Right cardiac atrium (tissue), 5 donors: ENCODE measurements at regions of chr15 and their contacts with region 1.

Region 1: GRCh38 chr15:70535071-70535954 is 228.0 kb downstream of the UACA start:
- DNase-seq: no peak
- ATAC-seq: no peak
- H3K4me3 ChIP-seq: no peak overlapping the region
- H3K27ac ChIP-seq: no peak overlapping the region
- H3K4me1 ChIP-seq: no peaks in the 10 kb centered on the region
- H3K27me3 ChIP-seq: no peaks in the 10 kb centered on the region

Region 2: DNA sequence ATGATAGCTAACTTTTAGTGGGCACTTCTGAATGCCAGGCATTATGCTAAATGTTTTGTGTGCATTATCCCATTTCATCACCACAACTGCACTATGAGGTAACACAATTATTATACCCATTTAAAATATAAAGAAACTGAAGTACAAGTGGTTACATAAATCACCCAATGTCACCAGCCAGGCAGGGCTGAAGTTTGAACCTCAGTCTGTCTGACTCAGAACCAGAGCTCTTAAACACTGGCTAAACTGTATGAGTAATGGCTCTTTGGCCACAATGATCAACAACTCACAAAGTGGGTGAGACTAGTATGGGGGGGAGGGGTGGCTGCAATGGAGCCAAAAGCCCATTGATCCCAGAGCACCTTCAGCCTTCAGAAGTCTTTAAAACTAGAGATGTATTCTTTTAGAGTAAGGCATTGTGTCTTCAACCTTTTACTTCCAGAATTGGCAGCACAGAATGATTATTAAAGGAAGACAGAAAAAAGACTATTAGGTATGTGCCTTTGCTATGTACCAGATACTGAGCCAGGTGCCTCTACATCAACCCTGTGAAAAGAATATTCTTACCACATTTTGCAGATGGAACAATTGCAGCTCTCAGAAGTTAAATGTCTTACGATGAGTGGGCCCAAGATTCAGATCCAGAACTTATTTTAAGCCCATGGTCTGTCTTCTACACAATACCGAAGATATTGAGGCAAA is 61.2 kb after region 1 on chr15:
- intact Hi-C with region 1: loop called in 1 of 4 experiments (anchors 10 kb)
- DNase-seq: no peak
- ATAC-seq: no peak
- H3K4me3 ChIP-seq: no peak overlapping the region
- H3K27ac ChIP-seq: no peak overlapping the region
- H3K4me1 ChIP-seq: no peaks in the 10 kb centered on the region
- H3K27me3 ChIP-seq: no peaks in the 10 kb centered on the region